ENCODE measurements at regions of chr12 and their contacts with region 1.

Region 1: DNA sequence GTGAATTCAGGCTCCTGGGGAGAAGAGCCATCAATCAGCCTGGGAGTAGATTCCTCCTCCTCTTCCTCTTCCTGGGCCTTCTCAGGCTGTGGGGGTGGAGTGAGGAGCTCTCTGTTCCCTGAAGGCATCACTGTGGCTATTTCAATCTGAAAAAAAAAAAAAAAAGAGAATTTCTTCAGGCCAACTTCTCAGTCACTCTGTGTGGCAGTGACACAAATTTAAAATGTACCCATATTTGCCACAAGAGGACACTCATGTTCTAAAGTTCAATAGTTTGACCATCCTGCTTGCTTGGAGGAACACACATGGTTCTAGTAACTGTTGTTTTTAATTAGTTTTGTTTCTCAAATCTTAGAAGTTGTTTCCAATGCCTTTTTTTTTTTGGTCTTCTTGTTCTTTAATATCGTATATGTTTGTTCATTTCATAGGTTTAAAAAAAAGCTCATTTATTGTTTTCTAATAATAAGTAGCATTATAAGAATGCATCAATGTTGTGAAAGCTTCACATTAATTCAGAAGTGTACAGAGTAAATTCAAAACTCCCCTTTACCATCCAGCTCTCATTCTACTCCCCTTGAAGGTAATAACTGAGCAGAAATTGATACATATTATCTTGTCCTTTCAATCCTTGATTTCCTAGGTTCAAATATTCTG is 23.3 kb upstream of the CCER1 start:
- DNase-seq: peak in 2 of 5 donors; percentile 5
- H3K4me3 ChIP-seq: no peak overlapping the region
- H3K4me3 Mint-ChIP-seq: no peak overlapping the region
- H3K27ac ChIP-seq: no peak overlapping the region
- H3K27ac Mint-ChIP-seq: no peak overlapping the region
- H3K4me1 ChIP-seq: no peaks in the 10 kb centered on the region
- H3K4me1 Mint-ChIP-seq: no peaks in the 10 kb centered on the region
- H3K27me3 ChIP-seq: no peaks in the 10 kb centered on the region
- H3K27me3 Mint-ChIP-seq: peaks cover 0 to 1% of the 10 kb centered on the region in 2 donors

Region 2: DNA sequence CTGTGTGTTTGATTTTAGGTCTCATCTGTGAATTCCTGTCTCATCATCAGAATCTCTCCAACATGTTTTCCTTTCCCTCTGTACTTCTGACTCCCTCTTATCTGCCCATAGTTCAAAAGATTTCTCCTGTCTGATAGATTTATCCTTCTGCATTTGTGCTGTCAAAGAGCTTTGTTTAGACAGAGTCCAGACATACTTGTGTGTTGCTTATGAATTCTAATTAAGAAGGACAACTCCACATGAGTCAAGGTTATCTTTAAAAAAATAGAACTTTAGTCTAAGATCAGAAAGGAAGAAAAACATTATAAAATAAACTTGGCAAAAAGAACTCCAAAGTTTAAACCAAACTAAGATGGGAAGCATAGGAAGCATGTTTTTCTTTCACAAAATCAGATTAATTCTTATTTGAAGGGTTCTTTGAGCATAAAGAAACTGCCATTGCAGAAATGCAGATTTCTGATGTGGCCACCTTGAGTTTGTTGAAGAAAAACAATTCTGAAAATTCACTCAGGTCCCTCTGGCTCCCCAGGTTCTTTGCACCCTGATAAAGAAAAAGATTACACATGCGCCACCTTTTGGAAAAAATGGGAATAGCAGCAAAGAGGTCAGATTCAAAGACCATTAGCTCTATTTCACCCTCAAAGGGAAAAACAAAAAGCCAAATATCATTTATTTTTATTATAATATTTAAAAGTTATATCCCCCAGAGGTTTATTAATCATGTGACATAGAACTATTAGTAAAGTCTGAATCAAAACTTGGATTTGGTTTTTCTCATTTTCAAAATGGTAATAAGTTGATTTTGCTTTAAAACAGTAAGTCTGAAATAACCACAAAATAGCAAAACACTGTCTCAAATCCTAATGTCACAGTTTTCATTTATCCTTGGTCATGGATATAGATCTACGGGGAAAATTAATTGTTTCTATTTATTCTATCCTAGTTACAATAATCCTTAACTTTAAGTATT is 348.1 kb after region 1 on chr12:
- CTCF ChIA-PET with region 1: no interaction called
- POLR2A ChIA-PET with region 1: no interaction called
- intact Hi-C with region 1: loop called (anchors 2 kb)
- DNase-seq: peak; percentile 27 to 46 (median 31)
- H3K4me3 ChIP-seq: no peak overlapping the region
- H3K4me3 Mint-ChIP-seq: no peak overlapping the region
- H3K27ac ChIP-seq: no peak overlapping the region
- H3K27ac Mint-ChIP-seq: no peak overlapping the region
- H3K4me1 ChIP-seq: no peaks in the 10 kb centered on the region
- H3K4me1 Mint-ChIP-seq: peaks cover 0 to 2% (median 0%) of the 10 kb centered on the region in 4 donors
- H3K27me3 ChIP-seq: no peaks in the 10 kb centered on the region
- H3K27me3 Mint-ChIP-seq: peaks cover 2 to 3% of the 10 kb centered on the region in 2 donors

Region 3: GRCh38 chr12:91355150-91356006 is 377.1 kb after region 1 on chr12:
- CTCF ChIA-PET with region 1: no interaction called
- POLR2A ChIA-PET with region 1: no interaction called
- intact Hi-C with region 1: loop called (anchors 10 kb)
- DNase-seq: peak; percentile 13 to 40 (median 28)
- H3K4me3 ChIP-seq: no peak overlapping the region
- H3K4me3 Mint-ChIP-seq: no peak overlapping the region
- H3K27ac ChIP-seq: no peak overlapping the region
- H3K27ac Mint-ChIP-seq: no peak overlapping the region
- H3K4me1 ChIP-seq: no peaks in the 10 kb centered on the region
- H3K4me1 Mint-ChIP-seq: peaks cover 0 to 5% (median 0%) of the 10 kb centered on the region in 4 donors
- H3K27me3 ChIP-seq: peaks cover 4% of the 10 kb centered on the region
- H3K27me3 Mint-ChIP-seq: peaks cover 4 to 16% of the 10 kb centered on the region in 2 donors

Measured in CD4-positive, alpha-beta memory T cell (primary cell).